Heart left ventricle (tissue), 16 donors: ENCODE measurements at regions of chr4 and their contacts with region 1.

Region 1: GRCh38 chr4:176277162-176277904 is 8.3 kb upstream of the ASB5 start:
- DNase-seq: peak in 4 of 5 donors; percentile 33 to 58 (median 48)
- ATAC-seq: peak in 3 of 4 donors; percentile 83 to 88 (median 83)
- H3K4me3 ChIP-seq: peak overlapping the region in 1 of 12 donors; percentile 3
- H3K27ac ChIP-seq: peak overlapping the region in 1 of 12 donors; percentile 70
- H3K4me1 ChIP-seq: peaks cover 0 to 7% (median 0%) of the 10 kb centered on the region in 12 donors
- H3K27me3 ChIP-seq: no peaks in the 10 kb centered on the region
- CTCF ChIP-seq: peak; percentile 26 to 67 (median 52)
- POLR2A ChIP-seq: no peak

Region 2: GRCh38 chr4:176150356-176150682 is 127.0 kb before region 1 on chr4:
- intact Hi-C with region 1: loop called (anchors 1 to 5 kb)
- DNase-seq: no peak
- ATAC-seq: peak in 2 of 4 donors; percentile 60 to 64
- H3K4me3 ChIP-seq: no peak overlapping the region
- H3K27ac ChIP-seq: no peak overlapping the region
- H3K4me1 ChIP-seq: peaks cover 0 to 7% (median 0%) of the 10 kb centered on the region in 12 donors
- H3K27me3 ChIP-seq: no peaks in the 10 kb centered on the region
- CTCF ChIP-seq: peak; percentile 18 to 63 (median 48)
- POLR2A ChIP-seq: no peak

Region 3: DNA sequence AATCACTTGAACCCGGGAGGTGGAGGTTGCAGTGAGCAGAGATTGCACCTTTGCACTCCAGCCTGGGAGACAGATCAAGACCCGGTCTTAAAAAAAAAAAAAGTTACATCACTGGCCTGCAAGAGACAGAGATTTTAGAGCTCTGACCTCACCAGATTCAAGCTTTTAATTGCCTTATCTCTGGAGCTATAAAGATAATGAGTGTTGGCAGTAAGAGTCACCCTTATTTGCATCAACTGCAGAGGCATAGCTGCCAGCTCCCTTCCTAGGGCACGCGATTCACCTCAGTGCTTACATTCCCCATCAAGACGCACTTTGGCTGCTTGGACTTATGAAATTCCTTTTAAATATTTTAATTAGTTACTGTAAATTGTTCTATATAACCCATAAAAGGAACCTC is 69.5 kb before region 1 on chr4:
- intact Hi-C with region 1: no loop called
- DNase-seq: peak in 1 of 5 donors; percentile 31
- ATAC-seq: peak in 3 of 4 donors; percentile 42 to 76 (median 69)
- H3K4me3 ChIP-seq: no peak overlapping the region
- H3K27ac ChIP-seq: no peak overlapping the region
- H3K4me1 ChIP-seq: peaks cover 0 to 6% (median 0%) of the 10 kb centered on the region in 12 donors
- H3K27me3 ChIP-seq: no peaks in the 10 kb centered on the region
- CTCF ChIP-seq: no peak
- POLR2A ChIP-seq: no peak

Region 4: GRCh38 chr4:176230836-176231235 is 46.5 kb before region 1 on chr4:
- intact Hi-C with region 1: loop called in 3 of 10 experiments (anchors 5 kb)
- DNase-seq: no peak
- ATAC-seq: peak; percentile 56 to 88 (median 68)
- H3K4me3 ChIP-seq: peak overlapping the region in 6 of 12 donors; percentile 11 to 32 (median 22)
- H3K27ac ChIP-seq: peak overlapping the region in 11 of 12 donors; percentile 11 to 79 (median 62)
- H3K4me1 ChIP-seq: peaks cover 0 to 25% (median 8%) of the 10 kb centered on the region in 12 donors
- H3K27me3 ChIP-seq: no peaks in the 10 kb centered on the region
- CTCF ChIP-seq: no peak
- POLR2A ChIP-seq: no peak

Region 5: DNA sequence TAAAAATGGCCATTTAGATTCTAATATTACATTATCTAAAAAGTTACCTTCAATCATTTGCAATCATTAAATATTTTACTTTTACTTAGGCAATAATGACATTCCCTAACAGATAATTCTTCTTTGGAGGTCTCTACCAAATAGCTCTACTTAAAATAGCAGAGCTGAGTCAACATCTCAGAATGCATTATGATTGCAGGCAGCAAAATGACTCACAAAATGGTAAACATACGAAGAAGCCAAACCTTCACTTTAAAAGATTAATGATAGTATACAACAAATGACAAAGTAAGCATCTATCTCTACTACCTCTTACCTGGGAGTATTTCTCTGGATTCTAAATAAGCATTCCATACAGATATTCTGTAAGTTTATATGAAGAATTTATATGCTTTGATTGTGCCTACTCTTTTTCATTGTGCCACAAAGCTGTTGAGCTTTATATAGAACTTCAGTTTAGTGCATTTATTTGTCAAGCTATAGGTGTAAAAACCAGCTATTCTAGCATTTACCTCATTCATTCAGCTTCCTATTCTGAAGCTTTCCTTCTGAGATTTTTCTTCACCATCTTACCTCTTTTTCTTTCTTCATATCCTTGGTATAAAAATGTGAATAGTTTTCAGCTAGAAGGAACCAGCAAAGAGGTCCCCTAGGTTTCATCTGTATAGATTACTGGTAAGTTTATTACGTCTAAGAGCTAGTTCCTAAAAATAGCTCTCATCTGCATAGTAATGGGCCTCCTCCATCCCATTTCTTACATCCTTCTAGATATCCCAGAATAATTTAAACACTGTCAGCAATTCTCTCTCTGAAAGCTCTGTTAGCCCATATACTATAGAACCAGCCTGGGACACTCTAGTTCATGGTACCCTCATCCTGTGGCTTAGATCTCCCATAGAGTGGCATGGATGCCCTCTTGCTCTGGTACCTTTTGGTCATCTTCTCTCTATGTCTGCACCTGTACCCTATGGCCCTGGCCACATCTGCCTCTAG is 25.2 kb after region 1 on chr4:
- intact Hi-C with region 1: no loop called
- DNase-seq: no peak
- ATAC-seq: no peak
- H3K4me3 ChIP-seq: no peak overlapping the region
- H3K27ac ChIP-seq: no peak overlapping the region
- H3K4me1 ChIP-seq: peaks cover 0 to 3% (median 0%) of the 10 kb centered on the region in 12 donors
- H3K27me3 ChIP-seq: peaks cover 0 to 3% (median 0%) of the 10 kb centered on the region in 9 donors
- CTCF ChIP-seq: no peak
- POLR2A ChIP-seq: no peak

Region 6: DNA sequence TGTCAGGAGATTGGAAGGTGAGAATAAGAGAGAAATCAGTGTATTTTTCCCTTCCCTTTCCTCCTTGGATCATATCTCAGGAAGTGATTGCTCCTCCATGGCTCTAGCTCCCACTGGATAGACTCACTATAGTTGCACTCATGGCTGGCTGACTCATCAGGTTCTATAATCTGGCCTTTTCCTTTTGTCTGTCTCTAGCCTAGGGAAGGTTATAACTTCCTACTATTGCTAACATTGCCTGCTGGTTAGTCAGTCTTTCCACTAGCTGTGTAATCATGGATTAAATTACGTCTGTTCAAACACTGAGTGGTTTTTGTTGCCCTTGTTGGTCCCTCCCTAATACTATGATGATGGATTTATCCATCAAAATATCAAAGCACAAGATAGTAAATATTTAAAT is 710.9 kb after region 1 on chr4:
- intact Hi-C with region 1: no loop called
- DNase-seq: no peak
- ATAC-seq: peak in 2 of 4 donors; percentile 42 to 56
- H3K4me3 ChIP-seq: no peak overlapping the region
- H3K27ac ChIP-seq: no peak overlapping the region
- H3K4me1 ChIP-seq: no peaks in the 10 kb centered on the region
- H3K27me3 ChIP-seq: no peaks in the 10 kb centered on the region
- CTCF ChIP-seq: no peak
- POLR2A ChIP-seq: no peak